ENCODE measurements at regions of chr16 and their contacts with region 1.

Region 1: GRCh38 chr16:28211712-28212534 is at the start of gene XPO6:
- DNase-seq: peak; percentile 99
- H3K4me3 Mint-ChIP-seq: peak within 1 kb of the TSS; percentile 96
- H3K27ac Mint-ChIP-seq: peak within 1 kb of the TSS; percentile 93
- H3K4me1 Mint-ChIP-seq: peaks cover 29% of the 10 kb centered on the region
- H3K27me3 Mint-ChIP-seq: no peaks in the 10 kb centered on the region
- total RNA-seq, gene XPO6: 215 to 229 TPM

Region 2: DNA sequence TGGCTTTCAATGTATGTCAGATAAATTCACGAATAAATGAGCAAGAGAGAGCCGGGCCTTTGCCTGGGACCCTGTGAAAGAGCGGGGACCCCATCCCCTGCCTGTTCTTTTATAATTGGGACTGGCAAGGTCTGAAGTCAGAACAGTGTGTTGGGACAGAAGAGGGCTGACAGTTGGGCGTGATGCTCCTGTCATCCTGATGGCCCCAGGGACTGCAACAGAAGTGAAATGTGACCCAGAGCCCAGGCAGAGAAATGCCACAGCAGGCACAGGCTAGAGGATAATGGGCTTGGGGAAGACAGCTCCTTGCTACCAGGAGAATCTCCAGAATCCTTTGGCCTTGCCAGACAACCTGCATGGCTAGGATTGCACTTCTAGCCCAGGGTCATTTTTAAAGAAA is 186.3 kb before region 1 on chr16:
- CTCF ChIA-PET with region 1: no interaction called
- intact Hi-C with region 1: no loop called
- DNase-seq: no peak
- H3K4me3 Mint-ChIP-seq: no peak overlapping the region
- H3K27ac Mint-ChIP-seq: no peak overlapping the region
- H3K4me1 Mint-ChIP-seq: no peaks in the 10 kb centered on the region
- H3K27me3 Mint-ChIP-seq: no peaks in the 10 kb centered on the region

Region 3: GRCh38 chr16:28188085-28188916 is 23.6 kb before region 1 on chr16:
- CTCF ChIA-PET with region 1: interaction called, 16 read pairs
- intact Hi-C with region 1: loop called (anchors 1 kb)
- DNase-seq: no peak
- H3K4me3 Mint-ChIP-seq: peak overlapping the region; percentile 43
- H3K27ac Mint-ChIP-seq: peak overlapping the region; percentile 89
- H3K4me1 Mint-ChIP-seq: peaks cover 88% of the 10 kb centered on the region
- H3K27me3 Mint-ChIP-seq: no peaks in the 10 kb centered on the region

Region 4: GRCh38 chr16:28193530-28194423 is 18.1 kb before region 1 on chr16:
- CTCF ChIA-PET with region 1: interaction called, 16 read pairs
- intact Hi-C with region 1: loop called (anchors 1 kb)
- DNase-seq: peak; percentile 77
- H3K4me3 Mint-ChIP-seq: peak overlapping the region; percentile 71
- H3K27ac Mint-ChIP-seq: peak overlapping the region; percentile 93
- H3K4me1 Mint-ChIP-seq: peaks cover 79% of the 10 kb centered on the region
- H3K27me3 Mint-ChIP-seq: no peaks in the 10 kb centered on the region

Region 5: DNA sequence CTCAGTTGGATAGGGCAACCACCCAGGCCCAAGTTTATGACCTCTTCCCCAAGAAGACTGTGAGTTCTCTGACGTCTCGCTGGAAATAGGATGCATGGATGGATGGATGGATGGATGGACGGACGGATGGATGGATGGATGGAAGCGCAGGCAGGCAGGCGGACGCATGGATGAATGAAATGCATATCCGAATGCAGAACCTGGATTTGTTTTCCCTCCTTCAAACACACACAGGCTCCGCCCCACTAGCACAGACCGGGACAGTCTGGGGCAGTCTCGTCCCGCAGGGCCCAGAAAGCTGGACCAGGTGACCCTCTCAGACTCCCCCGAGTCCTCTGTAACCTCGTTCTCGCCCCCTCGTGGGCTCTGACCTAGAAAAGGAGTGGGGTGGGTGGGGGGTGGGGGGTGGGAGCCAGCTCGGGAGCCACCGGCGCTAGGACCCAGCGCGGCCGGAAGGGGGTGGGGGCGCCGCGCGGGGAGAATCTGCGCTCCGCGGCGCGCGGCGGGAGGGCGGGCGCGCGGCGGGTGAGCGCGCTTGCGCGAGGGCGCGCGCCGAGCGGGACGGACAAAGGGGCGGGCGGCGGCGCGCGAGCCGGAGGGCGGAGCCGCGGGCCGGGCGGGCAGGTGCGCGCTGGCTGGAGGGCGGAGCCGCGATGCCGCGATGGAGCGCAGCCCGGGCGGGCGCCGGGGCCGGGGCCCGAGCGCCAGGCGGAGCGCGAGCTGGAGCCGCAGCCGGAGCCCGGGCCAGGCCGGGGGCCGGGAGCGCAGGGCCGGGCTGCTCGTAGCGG is 80.1 kb after region 1 on chr16 and contains the start of gene SBK1:
- CTCF ChIA-PET with region 1: no interaction called
- intact Hi-C with region 1: loop called (anchors 2 kb)
- DNase-seq: peak; percentile 78
- H3K4me3 Mint-ChIP-seq: peak within 1 kb of the TSS; percentile 87
- H3K27ac Mint-ChIP-seq: peak within 1 kb of the TSS; percentile 83
- H3K4me1 Mint-ChIP-seq: peaks cover 49% of the 10 kb centered on the region
- H3K27me3 Mint-ChIP-seq: no peaks in the 10 kb centered on the region
- total RNA-seq, gene SBK1: 2.8 to 3.4 TPM